ENCODE measurements at regions of chr14 and their contacts with region 1.

Region 1: GRCh38 chr14:35932659-35933322 is 106.7 kb downstream of the BRMS1L start:
- DNase-seq: peak; percentile 31
- H3K4me3 Mint-ChIP-seq: peak overlapping the region; percentile 73
- H3K27ac Mint-ChIP-seq: peak overlapping the region; percentile 58
- H3K4me1 Mint-ChIP-seq: peaks cover 42% of the 10 kb centered on the region
- H3K27me3 Mint-ChIP-seq: no peaks in the 10 kb centered on the region

Region 2: DNA sequence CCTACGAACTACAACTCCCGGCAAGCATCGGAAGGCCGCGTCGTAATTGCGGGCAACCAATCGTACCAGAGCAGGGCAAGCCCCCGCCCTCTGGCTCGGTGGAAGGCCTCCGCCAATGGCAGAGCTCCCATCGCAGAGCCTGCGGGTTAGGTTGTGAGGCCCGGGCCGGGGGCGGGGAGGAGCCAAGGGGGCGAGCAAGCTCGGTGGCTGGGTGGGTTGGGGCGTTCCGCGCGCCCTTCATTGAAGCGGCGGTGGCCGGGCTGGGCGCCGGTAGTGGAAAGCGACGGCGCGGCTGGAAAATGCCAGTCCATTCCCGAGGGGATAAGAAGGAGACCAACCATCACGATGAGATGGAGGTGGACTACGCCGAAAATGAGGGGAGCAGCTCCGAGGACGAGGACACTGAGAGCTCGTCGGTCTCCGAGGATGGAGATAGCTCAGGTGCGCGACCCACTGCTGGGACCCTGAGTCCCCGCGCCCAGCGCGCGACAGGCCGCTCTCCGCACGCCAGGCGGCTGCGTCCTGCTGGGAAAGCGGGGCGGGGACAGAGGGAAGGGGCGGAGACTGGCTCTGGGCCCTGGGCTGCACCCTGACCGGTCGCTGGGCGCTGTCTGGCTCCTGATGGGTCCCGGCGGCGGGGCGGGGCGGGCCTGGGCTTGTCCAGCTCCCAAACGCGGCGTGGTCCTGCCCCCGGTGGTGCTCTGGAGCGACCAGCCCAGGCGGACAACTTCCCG is 106.4 kb before region 1 on chr14 and contains the start of gene BRMS1L:
- intact Hi-C with region 1: loop called (anchors 5 kb)
- DNase-seq: peak; percentile 96
- H3K4me3 Mint-ChIP-seq: peak within 1 kb of the TSS; percentile 84
- H3K27ac Mint-ChIP-seq: peak within 1 kb of the TSS; percentile 90
- H3K4me1 Mint-ChIP-seq: peaks cover 21% of the 10 kb centered on the region
- H3K27me3 Mint-ChIP-seq: no peaks in the 10 kb centered on the region
- total RNA-seq, gene BRMS1L: 5.3 and 6.1 TPM in 2 replicates

Region 3: GRCh38 chr14:35861204-35861868 is 71.5 kb before region 1 on chr14:
- intact Hi-C with region 1: no loop called
- DNase-seq: no peak
- H3K4me3 Mint-ChIP-seq: no peak overlapping the region
- H3K27ac Mint-ChIP-seq: no peak overlapping the region
- H3K4me1 Mint-ChIP-seq: no peaks in the 10 kb centered on the region
- H3K27me3 Mint-ChIP-seq: no peaks in the 10 kb centered on the region

Region 4: DNA sequence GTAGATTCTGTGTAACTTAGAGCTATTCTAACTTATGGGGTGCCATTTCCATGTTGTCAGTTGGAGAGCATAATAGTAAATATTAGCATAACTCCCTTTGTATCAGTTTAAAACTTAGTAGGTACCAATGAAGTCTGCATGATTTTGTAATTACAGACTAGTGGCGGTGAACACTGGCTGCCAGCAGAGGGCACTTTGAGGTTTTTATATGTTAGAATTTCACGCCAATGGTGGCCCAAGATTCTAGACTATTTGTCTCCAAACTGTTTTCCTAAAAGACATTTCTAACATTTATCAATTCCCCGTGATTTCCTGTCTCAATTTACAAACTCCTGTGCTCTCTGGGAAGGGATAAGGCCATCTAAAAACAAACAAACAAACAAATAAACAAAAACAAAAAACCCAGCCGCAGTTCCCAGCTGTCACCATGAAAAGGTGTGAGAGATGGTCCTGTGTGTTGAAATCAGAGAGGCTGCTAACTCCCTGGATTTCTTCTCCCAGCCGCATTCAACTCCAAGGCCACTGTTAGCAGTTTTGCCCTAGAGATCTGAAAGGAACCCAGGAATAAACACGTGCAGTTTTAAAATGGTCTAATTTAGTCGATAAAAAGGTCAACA is 49.0 kb before region 1 on chr14:
- intact Hi-C with region 1: loop called (anchors 5 kb)
- DNase-seq: no peak
- H3K4me3 Mint-ChIP-seq: no peak overlapping the region
- H3K27ac Mint-ChIP-seq: no peak overlapping the region
- H3K4me1 Mint-ChIP-seq: peaks cover 11% of the 10 kb centered on the region
- H3K27me3 Mint-ChIP-seq: peaks cover 14% of the 10 kb centered on the region

Region 5: GRCh38 chr14:35963209-35963608 is 30.4 kb after region 1 on chr14:
- intact Hi-C with region 1: no loop called
- DNase-seq: no peak
- H3K4me3 Mint-ChIP-seq: no peak overlapping the region
- H3K27ac Mint-ChIP-seq: no peak overlapping the region
- H3K4me1 Mint-ChIP-seq: no peaks in the 10 kb centered on the region
- H3K27me3 Mint-ChIP-seq: peaks cover 5% of the 10 kb centered on the region

Region 6: DNA sequence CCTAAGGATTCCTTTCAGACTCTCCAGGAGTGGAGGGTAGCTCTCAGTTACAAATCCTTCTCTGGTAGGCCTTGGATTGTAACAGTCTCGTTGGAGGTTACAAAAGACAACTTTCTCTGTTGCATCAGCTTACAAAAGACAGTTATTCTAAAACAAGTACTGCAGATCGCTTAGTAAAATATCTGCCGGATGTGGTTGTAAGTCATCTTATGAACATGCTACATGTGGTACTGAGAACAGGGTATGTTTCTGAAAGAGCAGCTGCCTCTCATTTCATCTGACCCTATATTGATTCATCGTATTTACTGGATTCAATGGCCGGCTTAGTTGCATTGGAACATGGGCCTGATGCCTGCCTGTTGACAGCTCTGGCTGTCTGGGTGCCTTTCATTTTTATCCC is 86.3 kb after region 1 on chr14:
- intact Hi-C with region 1: loop called (anchors 1 kb)
- DNase-seq: no peak
- H3K4me3 Mint-ChIP-seq: no peak overlapping the region
- H3K27ac Mint-ChIP-seq: peak overlapping the region; percentile 30
- H3K4me1 Mint-ChIP-seq: peaks cover 27% of the 10 kb centered on the region
- H3K27me3 Mint-ChIP-seq: no peaks in the 10 kb centered on the region

Region 7: DNA sequence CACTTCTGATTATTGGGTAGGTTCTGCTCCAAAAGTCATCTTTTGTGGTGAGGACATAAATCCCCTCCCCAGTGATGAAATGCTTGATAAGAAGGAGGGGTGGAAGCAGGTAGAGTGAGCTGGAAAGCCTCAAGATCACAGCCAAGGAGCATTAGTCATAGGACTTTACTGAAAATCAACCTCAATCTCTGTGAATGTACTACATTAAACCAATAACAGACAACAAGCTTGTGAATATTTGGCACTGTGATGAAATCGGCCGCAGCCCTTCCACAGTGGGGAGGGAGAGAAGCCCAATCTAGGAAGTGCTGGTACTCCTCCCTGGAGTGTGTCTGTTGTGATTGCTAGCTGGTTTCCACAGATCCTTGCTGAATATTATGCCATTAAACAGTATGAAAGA is 284.9 kb after region 1 on chr14:
- intact Hi-C with region 1: no loop called
- DNase-seq: no peak
- H3K4me3 Mint-ChIP-seq: no peak overlapping the region
- H3K27ac Mint-ChIP-seq: peak overlapping the region; percentile 15
- H3K4me1 Mint-ChIP-seq: peaks cover 13% of the 10 kb centered on the region
- H3K27me3 Mint-ChIP-seq: peaks cover 2% of the 10 kb centered on the region

Region 8: GRCh38 chr14:36315159-36315853 is 382.5 kb after region 1 on chr14:
- intact Hi-C with region 1: loop called (anchors 5 kb)
- DNase-seq: no peak
- H3K4me3 Mint-ChIP-seq: no peak overlapping the region
- H3K27ac Mint-ChIP-seq: peak overlapping the region; percentile 82
- H3K4me1 Mint-ChIP-seq: peaks cover 33% of the 10 kb centered on the region
- H3K27me3 Mint-ChIP-seq: no peaks in the 10 kb centered on the region